Mammary epithelial cell (primary cell): ENCODE measurements at regions of chr11 and their contacts with region 1.

Region 1: GRCh38 chr11:94747146-94748080 is 20.7 kb upstream of the AMOTL1 start:
- DNase-seq: peak; percentile 97
- H3K4me3 ChIP-seq: no peak overlapping the region
- H3K27ac ChIP-seq: peak overlapping the region; percentile 99
- H3K4me1 ChIP-seq: peaks cover 64% of the 10 kb centered on the region
- H3K27me3 ChIP-seq: no peaks in the 10 kb centered on the region
- CTCF ChIP-seq: no peak

Region 2: GRCh38 chr11:94786264-94787126 is 39.1 kb after region 1 on chr11:
- CTCF ChIA-PET with region 1: no interaction called
- dilution Hi-C with region 1: loop called (anchors 5 kb)
- in situ Hi-C with region 1: no loop called
- intact Hi-C with region 1: no loop called
- DNase-seq: no peak
- H3K4me3 ChIP-seq: no peak overlapping the region
- H3K27ac ChIP-seq: no peak overlapping the region
- H3K4me1 ChIP-seq: peaks cover 59% of the 10 kb centered on the region
- H3K27me3 ChIP-seq: no peaks in the 10 kb centered on the region
- CTCF ChIP-seq: peak; percentile 49 to 58

Region 3: GRCh38 chr11:94849839-94850238 is 102.4 kb after region 1 on chr11:
- CTCF ChIA-PET with region 1: no interaction called
- dilution Hi-C with region 1: no loop called
- in situ Hi-C with region 1: no loop called
- intact Hi-C with region 1: loop called (anchors 5 kb)
- DNase-seq: no peak
- H3K4me3 ChIP-seq: no peak overlapping the region
- H3K27ac ChIP-seq: no peak overlapping the region
- H3K4me1 ChIP-seq: peaks cover 44% of the 10 kb centered on the region
- H3K27me3 ChIP-seq: no peaks in the 10 kb centered on the region
- CTCF ChIP-seq: no peak